ENCODE measurements at regions of chr11 and their contacts with region 1.

Region 1: GRCh38 chr11:76799066-76799804 is 16.1 kb downstream of the TSKU start:
- DNase-seq: peak; percentile 89 to 93
- ATAC-seq: peak; percentile 89 to 93 (median 90)
- H3K4me3 ChIP-seq: peak overlapping the region; percentile 46
- H3K27ac ChIP-seq: no peak overlapping the region
- H3K4me1 ChIP-seq: no peaks in the 10 kb centered on the region
- H3K27me3 ChIP-seq: no peaks in the 10 kb centered on the region
- CTCF ChIP-seq: peak; percentile 91

Region 2: DNA sequence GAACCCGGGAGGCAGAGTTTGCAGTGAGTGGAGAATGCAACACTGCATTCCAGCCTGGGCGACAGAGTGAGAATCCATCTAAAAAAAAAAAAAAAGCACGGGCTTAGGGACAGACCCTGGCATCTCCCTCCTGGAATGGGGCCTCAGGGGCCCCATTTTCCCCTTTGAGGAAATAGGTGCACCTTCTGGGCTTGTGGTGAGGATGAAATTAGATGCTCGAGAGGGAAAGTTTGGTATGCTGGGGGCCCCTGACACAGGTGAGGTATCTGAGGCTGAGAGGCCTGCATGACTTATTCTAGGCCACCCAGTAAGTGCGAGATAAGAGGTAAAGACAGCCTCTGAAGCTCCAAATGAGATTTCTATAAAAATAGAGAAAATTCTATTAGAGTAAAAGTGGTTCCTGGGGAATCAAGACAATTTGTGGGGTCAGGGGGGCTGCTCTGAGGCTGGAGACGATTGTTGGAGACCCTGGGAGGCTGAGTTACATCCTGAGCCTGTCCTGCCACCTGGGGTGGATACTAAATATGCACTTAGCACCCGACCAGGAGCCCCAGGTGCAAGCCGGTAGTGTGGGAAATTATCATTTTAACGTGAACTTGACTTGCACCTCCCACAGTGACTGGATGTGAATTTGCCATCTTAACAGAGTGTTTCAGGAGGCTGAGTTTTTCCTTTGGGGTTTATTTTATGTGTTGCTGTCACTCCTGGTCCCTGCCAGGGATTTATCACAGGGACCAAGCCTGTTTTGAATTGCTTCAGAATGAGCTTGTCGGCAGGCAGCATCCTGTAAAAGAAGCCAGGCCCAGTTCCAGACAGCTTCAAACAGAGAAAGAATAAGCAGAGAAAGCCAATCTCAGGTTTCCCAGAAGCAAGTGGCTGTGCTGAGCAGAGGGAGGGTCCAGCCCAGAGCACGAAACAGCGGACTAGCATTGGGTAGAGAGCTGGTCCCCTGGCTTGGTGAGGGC is 64.5 kb before region 1 on chr11:
- intact Hi-C with region 1: loop called (anchors 1 kb)
- DNase-seq: no peak
- ATAC-seq: peak in 1 of 4 donors; percentile 12
- H3K4me3 ChIP-seq: no peak overlapping the region
- H3K27ac ChIP-seq: no peak overlapping the region
- H3K4me1 ChIP-seq: no peaks in the 10 kb centered on the region
- H3K27me3 ChIP-seq: no peaks in the 10 kb centered on the region
- CTCF ChIP-seq: no peak